Right lobe of liver (tissue), 6 donors: ENCODE measurements at regions of chr11 and their contacts with region 1.

Region 1: DNA sequence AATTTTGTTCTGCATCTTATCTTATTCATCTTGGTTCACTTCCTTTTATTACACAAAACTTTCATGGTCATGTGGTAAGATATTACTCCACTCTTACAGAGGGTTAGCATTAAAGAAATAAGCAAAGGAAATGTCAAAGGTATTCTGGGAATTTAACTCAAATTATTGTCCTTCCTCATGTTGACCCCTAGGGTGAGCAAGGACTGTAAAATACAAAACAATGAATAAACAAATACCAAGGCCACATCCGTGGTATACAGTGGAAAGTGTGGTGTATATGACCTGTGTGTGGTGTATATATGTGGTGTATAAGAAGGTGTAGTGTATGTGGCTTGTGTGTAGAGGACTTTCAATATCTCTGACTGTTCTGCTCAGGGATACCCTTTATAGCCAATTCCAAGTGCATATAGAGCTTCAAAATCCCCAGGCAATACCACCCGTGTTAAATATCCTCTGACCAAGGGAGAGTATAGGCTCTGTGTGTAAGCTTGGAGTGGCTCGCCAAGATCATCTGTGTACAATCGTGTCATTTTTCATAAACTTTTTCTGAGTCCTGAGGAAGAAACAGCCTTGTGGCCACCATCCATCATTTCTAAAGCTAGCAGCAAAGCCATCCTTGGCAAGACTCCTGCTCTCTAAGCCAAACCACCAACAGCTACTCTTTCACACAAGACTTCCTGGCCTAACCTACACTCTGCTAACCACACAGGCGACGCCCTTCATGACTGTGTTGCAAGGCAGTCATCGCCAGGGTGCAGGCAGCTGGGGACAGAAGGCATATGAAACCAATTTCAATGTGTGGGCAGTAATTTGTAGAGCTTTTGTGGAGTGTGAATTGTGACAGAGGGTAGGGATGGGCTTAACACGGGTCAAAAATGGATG is 548.0 kb downstream of the ETS1 start:
- DNase-seq: no peak
- ATAC-seq: peak; percentile 51 to 60 (median 58)
- H3K4me3 ChIP-seq: no peak overlapping the region
- H3K27ac ChIP-seq: no peak overlapping the region
- H3K4me1 ChIP-seq: peaks cover 0 to 5% (median 2%) of the 10 kb centered on the region in 4 donors
- H3K27me3 ChIP-seq: no peaks in the 10 kb centered on the region
- CTCF ChIP-seq: peak in 2 of 4 donors; percentile 4
- POLR2A ChIP-seq: no peak

Region 2: DNA sequence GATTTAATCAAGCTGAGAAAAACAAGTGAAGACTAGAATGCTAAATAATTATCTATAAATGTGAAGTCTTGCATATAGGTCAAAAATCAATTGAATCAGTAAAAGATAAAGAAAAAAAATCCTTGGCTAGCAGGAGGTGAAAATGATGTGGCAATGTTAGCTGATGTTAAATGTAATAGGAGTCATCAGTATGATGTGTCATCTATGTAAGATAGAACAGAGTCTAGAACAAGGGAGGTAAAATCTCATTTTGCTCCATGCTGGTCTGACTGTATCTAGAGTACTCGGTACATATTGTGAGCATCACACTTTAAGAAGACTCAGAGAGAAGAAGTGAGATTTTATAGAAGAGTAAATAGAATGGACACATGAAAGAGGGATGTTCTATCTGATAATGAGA is 173.3 kb before region 1 on chr11:
- intact Hi-C with region 1: no loop called
- DNase-seq: no peak
- ATAC-seq: no peak
- H3K4me3 ChIP-seq: no peak overlapping the region
- H3K27ac ChIP-seq: no peak overlapping the region
- H3K4me1 ChIP-seq: no peaks in the 10 kb centered on the region
- H3K27me3 ChIP-seq: no peaks in the 10 kb centered on the region
- CTCF ChIP-seq: no peak
- POLR2A ChIP-seq: no peak

Region 3: GRCh38 chr11:127919206-127920000 is 120.0 kb before region 1 on chr11:
- intact Hi-C with region 1: no loop called
- DNase-seq: no peak
- ATAC-seq: no peak
- H3K4me3 ChIP-seq: no peak overlapping the region
- H3K27ac ChIP-seq: no peak overlapping the region
- H3K4me1 ChIP-seq: no peaks in the 10 kb centered on the region
- H3K27me3 ChIP-seq: no peaks in the 10 kb centered on the region
- CTCF ChIP-seq: no peak
- POLR2A ChIP-seq: no peak

Region 4: GRCh38 chr11:128116885-128117284 is 77.5 kb after region 1 on chr11:
- intact Hi-C with region 1: no loop called
- DNase-seq: no peak
- ATAC-seq: no peak
- H3K4me3 ChIP-seq: no peak overlapping the region
- H3K27ac ChIP-seq: no peak overlapping the region
- H3K4me1 ChIP-seq: no peaks in the 10 kb centered on the region
- H3K27me3 ChIP-seq: no peaks in the 10 kb centered on the region
- CTCF ChIP-seq: no peak
- POLR2A ChIP-seq: no peak

Region 5: DNA sequence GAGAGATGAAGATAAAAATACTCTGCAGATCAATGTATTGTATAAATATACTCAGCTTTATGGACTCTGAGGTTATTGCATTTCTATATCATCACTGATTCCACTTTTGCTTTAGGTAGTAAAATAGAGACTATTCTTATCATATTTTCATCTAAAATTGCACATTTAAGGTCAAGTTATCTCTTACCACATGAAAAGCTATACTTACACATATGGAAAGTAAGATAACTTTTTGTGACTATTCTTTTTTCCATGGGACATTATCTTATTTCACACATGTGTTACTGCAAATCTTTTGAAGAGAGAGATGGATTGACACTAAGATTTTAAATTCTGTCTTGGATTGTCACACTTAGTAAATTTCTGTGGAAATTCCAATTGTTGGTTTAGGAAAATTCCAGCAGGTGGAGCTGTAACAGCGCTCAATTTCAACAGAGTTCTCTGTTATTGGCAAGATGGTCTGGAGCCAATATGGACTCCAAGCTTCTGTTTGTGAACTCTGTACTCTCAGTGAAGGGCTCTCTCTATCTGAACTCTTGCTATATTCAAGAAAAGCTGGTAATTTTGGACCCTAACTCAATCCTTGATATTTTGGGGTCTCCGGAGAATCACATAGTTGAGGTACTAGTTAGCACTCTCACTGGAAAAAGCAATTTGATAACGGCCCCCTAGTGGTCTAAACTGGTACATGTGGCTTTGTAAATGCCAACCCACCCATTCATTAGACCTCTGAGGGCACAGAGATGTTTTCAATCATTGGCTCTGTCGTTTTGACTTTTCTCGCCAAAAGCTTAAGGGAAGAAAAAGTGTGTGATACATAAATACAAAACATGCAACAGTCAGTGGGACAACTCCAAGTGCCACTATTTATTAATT is 118.3 kb after region 1 on chr11:
- intact Hi-C with region 1: loop called in 1 of 2 experiments (anchors 10 kb)
- DNase-seq: no peak
- ATAC-seq: peak; percentile 87 to 92 (median 89)
- H3K4me3 ChIP-seq: peak overlapping the region in 1 of 3 donors; percentile 18
- H3K27ac ChIP-seq: no peak overlapping the region
- H3K4me1 ChIP-seq: peaks cover 0 to 8% (median 0%) of the 10 kb centered on the region in 4 donors
- H3K27me3 ChIP-seq: no peaks in the 10 kb centered on the region
- CTCF ChIP-seq: peak; percentile 79 to 98 (median 86)
- POLR2A ChIP-seq: no peak